Activated naive CD4-positive, alpha-beta T cell treated with anti-CD3 and anti-CD28 coated beads for 36 hours (primary cell): ENCODE measurements at regions of chr2 and their contacts with region 1.

Region 1: DNA sequence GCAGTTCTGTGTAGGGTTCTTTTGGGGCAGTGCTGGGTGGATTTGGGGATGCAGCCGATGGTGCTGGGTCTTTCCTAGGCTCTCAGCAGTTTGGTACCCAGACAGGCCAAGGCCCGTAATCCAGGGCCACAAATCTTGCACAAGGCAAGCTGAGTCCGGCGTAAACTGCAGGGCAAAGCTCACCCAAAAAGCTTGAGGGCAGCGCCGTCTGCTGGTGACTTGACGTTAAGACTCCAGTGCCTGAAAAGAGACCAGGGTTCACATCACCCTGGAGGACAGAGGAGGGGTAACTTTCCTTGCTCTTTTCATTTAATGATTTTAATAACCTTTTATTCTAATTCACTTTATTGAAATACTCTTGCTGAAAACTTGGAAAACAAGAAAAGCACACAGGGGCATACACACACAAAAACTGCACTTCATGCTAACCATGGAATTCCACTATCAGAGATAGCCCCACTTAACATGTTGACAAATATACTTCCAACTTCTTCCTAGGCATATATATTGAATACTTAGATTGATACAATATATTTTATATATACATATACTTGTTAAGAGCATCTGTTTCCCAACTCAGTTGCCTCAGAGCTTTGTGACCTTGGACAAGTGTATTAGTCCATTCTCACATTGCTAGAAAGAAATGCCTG is 38.9 kb downstream of the CNGA3 start:
- DNase-seq: peak; percentile 86
- H3K4me3 Mint-ChIP-seq: no peak overlapping the region
- H3K27ac Mint-ChIP-seq: no peak overlapping the region
- H3K4me1 Mint-ChIP-seq: no peaks in the 10 kb centered on the region
- H3K27me3 Mint-ChIP-seq: peaks cover 4% of the 10 kb centered on the region

Region 2: GRCh38 chr2:98295721-98296414 is 89.3 kb before region 1 on chr2:
- CTCF ChIA-PET with region 1: no interaction called
- intact Hi-C with region 1: loop called (anchors 10 kb)
- DNase-seq: no peak
- H3K4me3 Mint-ChIP-seq: no peak overlapping the region
- H3K27ac Mint-ChIP-seq: no peak overlapping the region
- H3K4me1 Mint-ChIP-seq: no peaks in the 10 kb centered on the region
- H3K27me3 Mint-ChIP-seq: peaks cover 17% of the 10 kb centered on the region

Region 3: GRCh38 chr2:98757904-98758421 is 372.8 kb after region 1 on chr2:
- CTCF ChIA-PET with region 1: no interaction called
- intact Hi-C with region 1: no loop called
- DNase-seq: peak; percentile 76
- H3K4me3 Mint-ChIP-seq: peak overlapping the region; percentile 59
- H3K27ac Mint-ChIP-seq: peak overlapping the region; percentile 86
- H3K4me1 Mint-ChIP-seq: peaks cover 52% of the 10 kb centered on the region
- H3K27me3 Mint-ChIP-seq: no peaks in the 10 kb centered on the region